B cell (primary cell): ENCODE measurements at regions of chr1 and their contacts with region 1.

Region 1: GRCh38 chr1:9196129-9197040 is 38.2 kb upstream of the H6PD start:
- DNase-seq: peak; percentile 81
- ATAC-seq: peak; percentile 78
- H3K4me3 ChIP-seq: no peak overlapping the region
- H3K4me3 Mint-ChIP-seq: peak overlapping the region; percentile 16
- H3K27ac ChIP-seq: no peak overlapping the region
- H3K27ac Mint-ChIP-seq: no peak overlapping the region
- H3K4me1 ChIP-seq: peaks cover 7 to 13% of the 10 kb centered on the region in 2 donors
- H3K4me1 Mint-ChIP-seq: peaks cover 31% of the 10 kb centered on the region
- H3K27me3 ChIP-seq: peaks cover 0 to 38% (median 22%) of the 10 kb centered on the region in 4 experiments
- H3K27me3 Mint-ChIP-seq: peaks cover 32% of the 10 kb centered on the region
- CTCF ChIP-seq: peak; percentile 84

Region 2: DNA sequence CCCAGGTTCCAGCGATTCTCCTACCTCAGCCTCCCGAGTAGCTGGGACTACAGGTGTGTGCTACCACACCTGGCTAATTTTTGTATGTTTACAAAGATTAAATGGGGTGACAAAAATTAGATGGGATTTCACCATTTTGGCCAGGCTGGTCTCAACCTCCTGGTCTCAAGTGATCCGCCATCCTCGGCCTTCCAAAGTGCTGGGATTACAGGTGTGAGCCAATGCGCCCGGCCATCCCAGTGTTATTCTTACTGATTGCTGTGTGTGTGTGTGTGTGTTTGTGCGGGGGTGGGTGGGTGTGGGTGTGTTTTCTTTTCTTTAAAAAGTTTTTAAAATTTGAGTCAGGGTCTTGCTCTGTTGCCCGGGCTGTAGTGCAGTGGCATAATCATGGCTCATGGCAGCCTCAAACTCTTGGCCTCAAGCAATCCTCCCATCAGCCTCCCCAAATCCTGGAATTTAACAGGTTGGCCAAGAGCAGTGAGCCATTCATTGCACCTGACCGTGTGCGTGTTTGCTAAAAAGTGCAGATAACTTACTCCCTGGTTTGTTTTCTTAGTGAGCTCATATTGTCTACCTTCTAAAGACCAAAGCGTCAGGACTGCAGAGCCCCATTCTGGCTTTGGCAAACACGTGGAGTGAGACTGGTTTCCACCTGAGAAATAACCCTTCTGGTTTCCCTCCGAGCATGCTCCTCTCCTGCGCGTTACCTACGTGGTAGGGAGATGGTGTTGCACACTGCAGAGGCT is 283.1 kb before region 1 on chr1:
- CTCF ChIA-PET with region 1: interaction called, 3 read pairs
- POLR2A ChIA-PET with region 1: no interaction called
- intact Hi-C with region 1: loop called (anchors 1 kb)
- DNase-seq: no peak
- ATAC-seq: no peak
- H3K4me3 ChIP-seq: no peak overlapping the region
- H3K4me3 Mint-ChIP-seq: no peak overlapping the region
- H3K27ac ChIP-seq: no peak overlapping the region
- H3K27ac Mint-ChIP-seq: no peak overlapping the region
- H3K4me1 ChIP-seq: no peaks in the 10 kb centered on the region
- H3K4me1 Mint-ChIP-seq: no peaks in the 10 kb centered on the region
- H3K27me3 ChIP-seq: peaks cover 0 to 5% (median 0%) of the 10 kb centered on the region in 4 experiments
- H3K27me3 Mint-ChIP-seq: peaks cover 19% of the 10 kb centered on the region
- CTCF ChIP-seq: no peak

Region 3: DNA sequence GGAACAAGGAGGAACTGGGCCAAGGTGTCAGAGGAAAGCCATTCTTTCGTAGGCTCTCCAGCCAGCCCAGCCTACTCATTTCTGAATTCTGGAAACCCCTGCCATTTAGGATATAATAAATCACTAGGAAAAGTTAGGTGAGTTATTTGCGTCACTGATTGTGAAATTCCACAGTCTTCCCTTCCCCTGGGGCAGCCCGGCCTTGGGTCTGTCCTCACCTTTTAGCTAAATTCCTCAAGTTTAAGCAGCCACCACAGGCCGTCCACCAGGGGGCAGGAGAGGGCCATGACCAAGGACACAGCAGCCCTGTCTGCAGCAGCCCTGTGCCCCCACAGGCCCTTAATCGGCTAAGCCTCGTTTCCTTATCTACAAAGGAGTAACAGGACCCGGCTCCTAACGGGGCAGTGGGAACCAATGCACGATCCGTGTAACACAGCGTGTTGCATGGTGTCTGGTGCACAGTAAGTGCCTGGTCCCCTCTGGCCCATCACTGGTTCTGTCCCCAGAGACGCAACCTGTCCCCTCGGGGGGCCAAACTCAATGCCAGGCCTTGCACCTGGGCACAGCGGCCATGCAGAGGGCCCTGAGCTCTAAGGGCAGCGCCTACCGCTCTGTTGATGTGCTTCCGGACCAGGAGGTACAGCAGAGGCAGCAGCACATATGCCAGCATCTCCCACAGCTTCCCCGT is 85.6 kb before region 1 on chr1:
- CTCF ChIA-PET with region 1: interaction called, 153 read pairs
- POLR2A ChIA-PET with region 1: no interaction called
- intact Hi-C with region 1: no loop called
- DNase-seq: peak; percentile 85
- ATAC-seq: peak; percentile 95
- H3K4me3 ChIP-seq: no peak overlapping the region
- H3K4me3 Mint-ChIP-seq: no peak overlapping the region
- H3K27ac ChIP-seq: no peak overlapping the region
- H3K27ac Mint-ChIP-seq: no peak overlapping the region
- H3K4me1 ChIP-seq: peaks cover 0 to 5% of the 10 kb centered on the region in 2 donors
- H3K4me1 Mint-ChIP-seq: peaks cover 2% of the 10 kb centered on the region
- H3K27me3 ChIP-seq: no peaks in the 10 kb centered on the region
- H3K27me3 Mint-ChIP-seq: no peaks in the 10 kb centered on the region
- CTCF ChIP-seq: peak; percentile 91

Region 4: GRCh38 chr1:9164532-9164900 is 31.9 kb before region 1 on chr1:
- CTCF ChIA-PET with region 1: no interaction called
- POLR2A ChIA-PET with region 1: no interaction called
- intact Hi-C with region 1: loop called (anchors 1 kb)
- DNase-seq: no peak
- ATAC-seq: peak; percentile 19
- H3K4me3 ChIP-seq: no peak overlapping the region
- H3K4me3 Mint-ChIP-seq: peak overlapping the region; percentile 81
- H3K27ac ChIP-seq: no peak overlapping the region
- H3K27ac Mint-ChIP-seq: peak overlapping the region; percentile 93
- H3K4me1 ChIP-seq: peaks cover 0 to 20% of the 10 kb centered on the region in 2 donors
- H3K4me1 Mint-ChIP-seq: peaks cover 22% of the 10 kb centered on the region
- H3K27me3 ChIP-seq: no peaks in the 10 kb centered on the region
- H3K27me3 Mint-ChIP-seq: peaks cover 2% of the 10 kb centered on the region
- CTCF ChIP-seq: no peak

Region 5: GRCh38 chr1:9234223-9235095 is 38.1 kb after region 1 on chr1 and contains the start of gene H6PD:
- CTCF ChIA-PET with region 1: interaction called, 4 read pairs
- POLR2A ChIA-PET with region 1: interaction called, 3 read pairs
- intact Hi-C with region 1: loop called (anchors 2 kb)
- DNase-seq: peak; percentile 92
- ATAC-seq: peak; percentile 83
- H3K4me3 ChIP-seq: peak within 1 kb of the TSS; percentile 55 to 80 (median 73)
- H3K4me3 Mint-ChIP-seq: peak within 1 kb of the TSS; percentile 96
- H3K27ac ChIP-seq: peak within 1 kb of the TSS; percentile 79 to 88
- H3K27ac Mint-ChIP-seq: peak within 1 kb of the TSS; percentile 96
- H3K4me1 ChIP-seq: peaks cover 19 to 36% of the 10 kb centered on the region in 2 donors
- H3K4me1 Mint-ChIP-seq: peaks cover 41% of the 10 kb centered on the region
- H3K27me3 ChIP-seq: no peaks in the 10 kb centered on the region
- H3K27me3 Mint-ChIP-seq: no peaks in the 10 kb centered on the region
- CTCF ChIP-seq: peak; percentile 63
- total RNA-seq, gene H6PD: 30.2 and 31.4 TPM in 2 replicates

Region 6: DNA sequence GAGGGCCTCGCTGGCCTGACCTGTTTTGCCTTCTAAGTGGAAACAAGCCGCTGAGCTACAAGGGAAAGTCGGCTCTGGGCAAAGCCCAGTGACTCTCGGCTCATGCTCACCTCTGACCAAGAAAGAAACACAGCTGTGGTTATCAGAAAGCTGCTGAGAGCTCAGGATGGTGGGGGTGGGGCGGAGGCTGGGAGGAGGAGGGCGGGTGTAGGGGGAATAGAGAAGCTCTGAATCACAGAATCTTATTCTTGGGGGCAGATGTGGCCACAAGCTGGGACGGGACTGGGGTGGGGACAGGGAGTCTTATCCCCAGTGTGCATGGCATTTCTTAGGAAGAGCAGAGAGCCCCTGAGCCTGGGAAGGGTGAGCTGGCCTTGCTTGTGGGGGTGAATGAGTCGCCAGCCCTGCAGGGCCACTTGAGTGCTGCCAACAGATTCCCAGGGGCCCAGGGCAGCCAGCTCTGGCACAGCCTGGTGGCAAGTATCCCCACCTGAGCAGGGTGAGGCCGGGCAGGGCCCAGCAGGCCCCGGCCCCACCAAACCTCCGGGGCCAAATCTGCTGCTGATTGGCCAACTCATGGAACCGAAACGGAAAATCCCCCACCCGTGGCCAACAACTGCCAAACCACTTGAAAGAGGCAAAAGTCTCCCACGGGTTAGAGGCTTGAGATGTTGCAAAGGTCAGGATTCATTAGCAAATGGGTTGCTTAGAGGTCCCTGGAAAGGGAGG is 216.9 kb after region 1 on chr1:
- CTCF ChIA-PET with region 1: no interaction called
- POLR2A ChIA-PET with region 1: no interaction called
- intact Hi-C with region 1: no loop called
- DNase-seq: peak; percentile 72
- ATAC-seq: peak; percentile 73
- H3K4me3 ChIP-seq: peak overlapping the region in 3 of 5 experiments; percentile 12 to 27 (median 12)
- H3K4me3 Mint-ChIP-seq: peak overlapping the region; percentile 49
- H3K27ac ChIP-seq: peak overlapping the region; percentile 41 to 67
- H3K27ac Mint-ChIP-seq: peak overlapping the region; percentile 85
- H3K4me1 ChIP-seq: peaks cover 35 to 59% of the 10 kb centered on the region in 2 donors
- H3K4me1 Mint-ChIP-seq: peaks cover 51% of the 10 kb centered on the region
- H3K27me3 ChIP-seq: no peaks in the 10 kb centered on the region
- H3K27me3 Mint-ChIP-seq: no peaks in the 10 kb centered on the region
- CTCF ChIP-seq: no peak

Region 7: DNA sequence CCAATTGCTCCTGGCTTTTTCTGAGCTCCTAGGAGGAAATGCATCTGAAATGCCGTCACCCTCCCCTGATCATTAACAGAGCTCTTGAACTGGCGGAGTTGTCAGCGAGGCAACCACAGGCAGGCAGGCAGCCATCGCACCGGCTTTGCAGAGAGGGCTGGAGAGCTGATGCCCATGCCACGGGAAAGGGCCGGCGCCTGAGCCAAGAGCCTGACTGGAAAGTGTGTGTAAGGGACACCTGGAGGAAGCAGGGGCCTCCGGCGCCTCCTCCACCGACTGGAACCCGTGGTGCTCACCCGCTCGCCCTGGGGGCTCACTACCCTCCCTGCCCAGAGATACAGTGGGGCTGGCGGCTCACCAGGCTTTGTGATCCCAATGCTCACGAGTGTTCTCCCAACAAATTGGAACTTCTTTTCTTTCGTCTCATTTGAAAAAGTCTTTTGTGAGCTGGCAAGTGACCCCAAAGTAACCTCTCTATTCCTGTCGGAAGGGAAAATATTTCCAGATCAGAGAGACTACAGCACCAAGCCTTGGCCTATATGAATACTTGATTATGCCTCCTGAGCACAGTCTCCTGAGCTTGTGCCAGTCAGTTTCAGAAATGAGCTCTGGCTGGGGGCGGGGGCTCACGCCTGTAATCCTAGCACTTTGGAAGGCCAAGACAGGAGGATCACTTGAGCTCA is 245.2 kb after region 1 on chr1:
- CTCF ChIA-PET with region 1: no interaction called
- POLR2A ChIA-PET with region 1: no interaction called
- intact Hi-C with region 1: no loop called
- DNase-seq: no peak
- ATAC-seq: no peak
- H3K4me3 ChIP-seq: no peak overlapping the region
- H3K4me3 Mint-ChIP-seq: no peak overlapping the region
- H3K27ac ChIP-seq: no peak overlapping the region
- H3K27ac Mint-ChIP-seq: no peak overlapping the region
- H3K4me1 ChIP-seq: no peaks in the 10 kb centered on the region
- H3K4me1 Mint-ChIP-seq: no peaks in the 10 kb centered on the region
- H3K27me3 ChIP-seq: peaks cover 0 to 2% (median 0%) of the 10 kb centered on the region in 4 experiments
- H3K27me3 Mint-ChIP-seq: peaks cover 12% of the 10 kb centered on the region
- CTCF ChIP-seq: no peak

Region 8: GRCh38 chr1:10360045-10360444 is 1163.7 kb after region 1 on chr1:
- CTCF ChIA-PET with region 1: no interaction called
- POLR2A ChIA-PET with region 1: no interaction called
- intact Hi-C with region 1: no loop called
- DNase-seq: no peak
- ATAC-seq: no peak
- H3K4me3 ChIP-seq: no peak overlapping the region
- H3K4me3 Mint-ChIP-seq: no peak overlapping the region
- H3K27ac ChIP-seq: no peak overlapping the region
- H3K27ac Mint-ChIP-seq: no peak overlapping the region
- H3K4me1 ChIP-seq: no peaks in the 10 kb centered on the region
- H3K4me1 Mint-ChIP-seq: no peaks in the 10 kb centered on the region
- H3K27me3 ChIP-seq: no peaks in the 10 kb centered on the region
- H3K27me3 Mint-ChIP-seq: no peaks in the 10 kb centered on the region
- CTCF ChIP-seq: no peak